CD4-positive, alpha-beta memory T cell (primary cell): ENCODE measurements at regions of chr3 and their contacts with region 1.

Region 1: DNA sequence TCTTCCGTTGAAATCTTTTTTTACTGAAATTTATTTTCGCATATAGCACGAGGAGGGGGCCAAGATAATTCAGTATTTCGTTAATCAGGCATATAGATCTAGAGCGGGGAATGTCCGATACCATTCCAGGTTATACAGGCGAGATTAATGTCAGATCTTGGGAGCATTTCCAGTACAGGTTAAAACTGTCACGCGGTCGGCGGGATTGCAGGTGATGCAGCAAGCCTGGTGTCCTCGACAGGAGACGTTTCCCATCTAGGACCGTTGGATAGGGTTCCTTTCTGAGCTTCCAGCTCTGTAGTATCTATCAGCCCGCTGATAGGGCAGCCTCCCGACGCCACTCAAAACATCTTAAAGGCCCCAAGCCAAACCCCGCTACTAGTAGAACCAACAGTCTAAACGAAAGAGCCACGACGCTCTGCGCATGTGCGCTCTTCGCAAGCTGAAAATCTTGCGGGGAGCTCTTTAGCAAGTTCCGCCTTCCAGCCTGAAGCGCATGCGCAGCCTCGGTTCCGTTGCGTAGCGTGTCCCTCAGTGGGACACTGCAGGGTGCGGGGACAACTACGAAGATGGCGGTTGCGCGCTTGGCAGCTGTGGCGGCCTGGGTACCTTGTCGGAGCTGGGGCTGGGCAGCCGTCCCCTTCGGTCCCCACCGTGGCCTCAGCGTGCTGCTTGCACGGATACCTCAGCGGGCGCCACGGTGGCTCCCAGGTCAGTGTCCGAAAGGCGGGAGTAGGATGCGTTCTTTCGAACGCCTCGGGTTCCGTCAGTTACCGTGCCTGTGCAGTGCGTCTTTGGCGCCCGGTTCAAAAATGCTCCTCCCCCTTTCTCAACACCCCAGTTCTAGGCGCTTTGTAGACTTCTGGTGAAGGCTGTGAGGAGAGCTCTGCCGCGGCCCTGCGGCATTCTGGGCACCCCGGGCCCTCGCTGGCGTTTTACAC is at the start of gene ABHD10:
- DNase-seq: peak; percentile 92 to 98 (median 96)
- H3K4me3 ChIP-seq: peak within 1 kb of the TSS; percentile 90 to 95
- H3K4me3 Mint-ChIP-seq: peak within 1 kb of the TSS; percentile 92 to 97 (median 92)
- H3K27ac ChIP-seq: peak within 1 kb of the TSS; percentile 80
- H3K27ac Mint-ChIP-seq: peak within 1 kb of the TSS; percentile 91 to 97 (median 95)
- H3K4me1 ChIP-seq: peaks cover 43% of the 10 kb centered on the region
- H3K4me1 Mint-ChIP-seq: peaks cover 26 to 48% (median 35%) of the 10 kb centered on the region in 4 donors
- H3K27me3 ChIP-seq: no peaks in the 10 kb centered on the region
- H3K27me3 Mint-ChIP-seq: no peaks in the 10 kb centered on the region
- total RNA-seq, gene ABHD10: 39.7 to 40.1 TPM

Region 2: DNA sequence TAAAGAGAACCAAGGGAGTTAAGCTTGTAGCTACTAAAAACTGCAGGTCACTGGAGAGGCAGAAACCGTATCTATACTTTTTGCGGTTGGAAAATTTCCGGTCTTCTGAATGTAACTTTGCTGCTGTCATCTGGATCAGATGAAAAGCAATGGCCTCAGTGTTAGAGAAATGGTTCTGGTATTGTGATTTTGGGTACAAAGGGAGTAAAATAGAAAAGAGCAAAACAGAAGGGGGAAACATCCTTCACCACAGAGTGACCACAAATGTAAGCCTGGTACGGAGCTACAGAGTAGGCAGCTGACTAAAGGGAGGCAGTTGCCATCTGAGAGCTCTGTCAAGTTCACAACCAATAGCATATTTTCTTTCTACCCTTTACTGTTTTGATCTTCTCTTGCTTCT is 431.1 kb before region 1 on chr3:
- CTCF ChIA-PET with region 1: no interaction called
- POLR2A ChIA-PET with region 1: interaction called, 12 read pairs
- intact Hi-C with region 1: loop called (anchors 5 kb)
- DNase-seq: peak; percentile 70 to 78 (median 74)
- H3K4me3 ChIP-seq: peak overlapping the region; percentile 20 to 70
- H3K4me3 Mint-ChIP-seq: no peak overlapping the region
- H3K27ac ChIP-seq: peak overlapping the region; percentile 89
- H3K27ac Mint-ChIP-seq: no peak overlapping the region
- H3K4me1 ChIP-seq: peaks cover 90% of the 10 kb centered on the region
- H3K4me1 Mint-ChIP-seq: peaks cover 0 to 42% (median 36%) of the 10 kb centered on the region in 4 donors
- H3K27me3 ChIP-seq: no peaks in the 10 kb centered on the region
- H3K27me3 Mint-ChIP-seq: no peaks in the 10 kb centered on the region

Region 3: GRCh38 chr3:111859974-111860859 is 118.5 kb before region 1 on chr3:
- CTCF ChIA-PET with region 1: interaction called, 13 read pairs
- POLR2A ChIA-PET with region 1: interaction called, 36 read pairs
- intact Hi-C with region 1: no loop called
- DNase-seq: peak; percentile 62 to 78 (median 71)
- H3K4me3 ChIP-seq: peak overlapping the region; percentile 59 to 84
- H3K4me3 Mint-ChIP-seq: peak overlapping the region; percentile 91 to 98 (median 97)
- H3K27ac ChIP-seq: peak overlapping the region; percentile 63
- H3K27ac Mint-ChIP-seq: peak overlapping the region; percentile 89 to 97 (median 95)
- H3K4me1 ChIP-seq: peaks cover 11% of the 10 kb centered on the region
- H3K4me1 Mint-ChIP-seq: peaks cover 15 to 47% (median 26%) of the 10 kb centered on the region in 4 donors
- H3K27me3 ChIP-seq: no peaks in the 10 kb centered on the region
- H3K27me3 Mint-ChIP-seq: peaks cover 0 to 1% of the 10 kb centered on the region in 2 donors

Region 4: GRCh38 chr3:111910806-111911205 is 68.0 kb before region 1 on chr3:
- CTCF ChIA-PET with region 1: no interaction called
- POLR2A ChIA-PET with region 1: no interaction called
- intact Hi-C with region 1: no loop called
- DNase-seq: no peak
- H3K4me3 ChIP-seq: no peak overlapping the region
- H3K4me3 Mint-ChIP-seq: no peak overlapping the region
- H3K27ac ChIP-seq: no peak overlapping the region
- H3K27ac Mint-ChIP-seq: peak overlapping the region in 1 of 7 donors; percentile 9
- H3K4me1 ChIP-seq: no peaks in the 10 kb centered on the region
- H3K4me1 Mint-ChIP-seq: peaks cover 0 to 6% (median 5%) of the 10 kb centered on the region in 4 donors
- H3K27me3 ChIP-seq: no peaks in the 10 kb centered on the region
- H3K27me3 Mint-ChIP-seq: no peaks in the 10 kb centered on the region

Region 5: GRCh38 chr3:111967651-111968274 is 11.0 kb before region 1 on chr3:
- CTCF ChIA-PET with region 1: interaction called, 29 read pairs
- POLR2A ChIA-PET with region 1: interaction called, 6 read pairs
- intact Hi-C with region 1: no loop called
- DNase-seq: peak; percentile 69 to 77 (median 69)
- H3K4me3 ChIP-seq: no peak overlapping the region
- H3K4me3 Mint-ChIP-seq: peak overlapping the region in 1 of 8 donors; percentile 11
- H3K27ac ChIP-seq: no peak overlapping the region
- H3K27ac Mint-ChIP-seq: peak overlapping the region in 2 of 7 donors; percentile 43 to 44
- H3K4me1 ChIP-seq: no peaks in the 10 kb centered on the region
- H3K4me1 Mint-ChIP-seq: peaks cover 2 to 6% (median 4%) of the 10 kb centered on the region in 4 donors
- H3K27me3 ChIP-seq: no peaks in the 10 kb centered on the region
- H3K27me3 Mint-ChIP-seq: no peaks in the 10 kb centered on the region

Region 6: DNA sequence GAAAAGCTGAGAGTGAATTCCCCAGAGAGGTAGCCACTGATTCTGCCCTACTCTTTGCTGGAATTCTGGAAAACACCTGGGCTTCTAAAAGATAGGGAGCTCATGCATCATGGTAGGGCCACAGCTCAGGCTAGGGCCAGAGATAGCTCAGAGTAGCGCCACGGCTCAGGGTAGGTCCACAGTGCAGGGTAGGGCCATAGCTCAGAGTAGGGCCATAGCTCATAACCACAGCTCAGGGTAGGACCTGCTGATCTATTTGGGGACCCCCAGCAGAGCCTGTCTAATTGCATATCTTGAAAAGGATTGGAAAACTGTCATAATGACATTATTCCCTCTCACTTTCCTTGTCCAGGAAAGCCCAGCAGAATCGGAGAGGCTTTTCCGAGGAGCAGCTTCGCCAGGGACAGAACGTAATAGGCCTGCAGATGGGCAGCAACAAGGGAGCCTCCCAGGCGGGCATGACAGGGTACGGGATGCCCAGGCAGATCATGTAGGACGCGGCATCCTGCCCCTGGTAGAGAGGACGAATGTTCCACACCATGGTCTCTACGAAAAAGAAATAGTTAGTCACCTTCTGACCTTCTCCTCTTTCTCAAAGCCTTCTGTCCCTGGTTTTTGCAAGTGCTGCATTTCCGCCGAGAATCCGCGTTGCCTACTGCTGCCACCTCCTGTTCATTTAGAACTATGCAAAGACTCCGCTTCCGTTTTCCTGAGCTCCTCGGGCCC is 34.5 kb after region 1 on chr3:
- CTCF ChIA-PET with region 1: interaction called, 13 read pairs
- POLR2A ChIA-PET with region 1: interaction called, 10 read pairs
- intact Hi-C with region 1: no loop called
- DNase-seq: peak; percentile 46 to 54 (median 51)
- H3K4me3 ChIP-seq: peak overlapping the region in 1 of 2 donors; percentile 19
- H3K4me3 Mint-ChIP-seq: peak overlapping the region in 5 of 8 donors; percentile 3 to 51 (median 33)
- H3K27ac ChIP-seq: no peak overlapping the region
- H3K27ac Mint-ChIP-seq: peak overlapping the region in 3 of 7 donors; percentile 4 to 57 (median 56)
- H3K4me1 ChIP-seq: peaks cover 4% of the 10 kb centered on the region
- H3K4me1 Mint-ChIP-seq: peaks cover 5 to 12% (median 8%) of the 10 kb centered on the region in 4 donors
- H3K27me3 ChIP-seq: no peaks in the 10 kb centered on the region
- H3K27me3 Mint-ChIP-seq: no peaks in the 10 kb centered on the region

Region 7: GRCh38 chr3:112074721-112075497 is 96.1 kb after region 1 on chr3:
- CTCF ChIA-PET with region 1: interaction called, 4 read pairs
- POLR2A ChIA-PET with region 1: interaction called, 6 read pairs
- intact Hi-C with region 1: loop called (anchors 10 kb)
- DNase-seq: peak; percentile 38 to 68 (median 61)
- H3K4me3 ChIP-seq: no peak overlapping the region
- H3K4me3 Mint-ChIP-seq: peak overlapping the region; percentile 37 to 82 (median 72)
- H3K27ac ChIP-seq: peak overlapping the region; percentile 21
- H3K27ac Mint-ChIP-seq: peak overlapping the region; percentile 65 to 93 (median 83)
- H3K4me1 ChIP-seq: peaks cover 35% of the 10 kb centered on the region
- H3K4me1 Mint-ChIP-seq: peaks cover 28 to 60% (median 40%) of the 10 kb centered on the region in 4 donors
- H3K27me3 ChIP-seq: no peaks in the 10 kb centered on the region
- H3K27me3 Mint-ChIP-seq: no peaks in the 10 kb centered on the region

Region 8: GRCh38 chr3:112097378-112097777 is 118.6 kb after region 1 on chr3:
- CTCF ChIA-PET with region 1: no interaction called
- POLR2A ChIA-PET with region 1: no interaction called
- intact Hi-C with region 1: no loop called
- DNase-seq: no peak
- H3K4me3 ChIP-seq: no peak overlapping the region
- H3K4me3 Mint-ChIP-seq: no peak overlapping the region
- H3K27ac ChIP-seq: no peak overlapping the region
- H3K27ac Mint-ChIP-seq: no peak overlapping the region
- H3K4me1 ChIP-seq: peaks cover 7% of the 10 kb centered on the region
- H3K4me1 Mint-ChIP-seq: peaks cover 9 to 11% (median 10%) of the 10 kb centered on the region in 4 donors
- H3K27me3 ChIP-seq: no peaks in the 10 kb centered on the region
- H3K27me3 Mint-ChIP-seq: peaks cover 0 to 7% of the 10 kb centered on the region in 2 donors